ENCODE measurements at regions of chr4 and their contacts with region 1.

Region 1: GRCh38 chr4:77819843-77820648 is 878 bp upstream of the CNOT6L start:
- DNase-seq: peak; percentile 80
- ATAC-seq: peak; percentile 75
- H3K4me3 ChIP-seq: peak overlapping the region; percentile 97
- H3K27ac ChIP-seq: peak overlapping the region; percentile 64
- H3K4me1 ChIP-seq: peaks cover 12% of the 10 kb centered on the region
- H3K27me3 ChIP-seq: no peaks in the 10 kb centered on the region
- CTCF ChIP-seq: no peak

Region 2: GRCh38 chr4:77629885-77630284 is 190.2 kb before region 1 on chr4:
- CTCF ChIA-PET with region 1: no interaction called
- POLR2A ChIA-PET with region 1: no interaction called
- intact Hi-C with region 1: no loop called
- DNase-seq: no peak
- ATAC-seq: no peak
- H3K4me3 ChIP-seq: no peak overlapping the region
- H3K27ac ChIP-seq: no peak overlapping the region
- H3K4me1 ChIP-seq: no peaks in the 10 kb centered on the region
- H3K27me3 ChIP-seq: no peaks in the 10 kb centered on the region
- CTCF ChIP-seq: no peak

Region 3: GRCh38 chr4:77681792-77682191 is 138.3 kb before region 1 on chr4:
- CTCF ChIA-PET with region 1: no interaction called
- POLR2A ChIA-PET with region 1: no interaction called
- intact Hi-C with region 1: no loop called
- DNase-seq: no peak
- ATAC-seq: no peak
- H3K4me3 ChIP-seq: no peak overlapping the region
- H3K27ac ChIP-seq: no peak overlapping the region
- H3K4me1 ChIP-seq: no peaks in the 10 kb centered on the region
- H3K27me3 ChIP-seq: no peaks in the 10 kb centered on the region
- CTCF ChIP-seq: no peak

Region 4: GRCh38 chr4:77777135-77777807 is 42.8 kb before region 1 on chr4:
- CTCF ChIA-PET with region 1: no interaction called
- POLR2A ChIA-PET with region 1: no interaction called
- intact Hi-C with region 1: no loop called
- DNase-seq: no peak
- ATAC-seq: no peak
- H3K4me3 ChIP-seq: no peak overlapping the region
- H3K27ac ChIP-seq: no peak overlapping the region
- H3K4me1 ChIP-seq: no peaks in the 10 kb centered on the region
- H3K27me3 ChIP-seq: no peaks in the 10 kb centered on the region
- CTCF ChIP-seq: no peak

Region 5: GRCh38 chr4:77800077-77800476 is 20.0 kb before region 1 on chr4:
- CTCF ChIA-PET with region 1: interaction called, 12 read pairs
- POLR2A ChIA-PET with region 1: no interaction called
- intact Hi-C with region 1: no loop called
- DNase-seq: no peak
- ATAC-seq: no peak
- H3K4me3 ChIP-seq: no peak overlapping the region
- H3K27ac ChIP-seq: no peak overlapping the region
- H3K4me1 ChIP-seq: no peaks in the 10 kb centered on the region
- H3K27me3 ChIP-seq: no peaks in the 10 kb centered on the region
- CTCF ChIP-seq: no peak

Region 6: DNA sequence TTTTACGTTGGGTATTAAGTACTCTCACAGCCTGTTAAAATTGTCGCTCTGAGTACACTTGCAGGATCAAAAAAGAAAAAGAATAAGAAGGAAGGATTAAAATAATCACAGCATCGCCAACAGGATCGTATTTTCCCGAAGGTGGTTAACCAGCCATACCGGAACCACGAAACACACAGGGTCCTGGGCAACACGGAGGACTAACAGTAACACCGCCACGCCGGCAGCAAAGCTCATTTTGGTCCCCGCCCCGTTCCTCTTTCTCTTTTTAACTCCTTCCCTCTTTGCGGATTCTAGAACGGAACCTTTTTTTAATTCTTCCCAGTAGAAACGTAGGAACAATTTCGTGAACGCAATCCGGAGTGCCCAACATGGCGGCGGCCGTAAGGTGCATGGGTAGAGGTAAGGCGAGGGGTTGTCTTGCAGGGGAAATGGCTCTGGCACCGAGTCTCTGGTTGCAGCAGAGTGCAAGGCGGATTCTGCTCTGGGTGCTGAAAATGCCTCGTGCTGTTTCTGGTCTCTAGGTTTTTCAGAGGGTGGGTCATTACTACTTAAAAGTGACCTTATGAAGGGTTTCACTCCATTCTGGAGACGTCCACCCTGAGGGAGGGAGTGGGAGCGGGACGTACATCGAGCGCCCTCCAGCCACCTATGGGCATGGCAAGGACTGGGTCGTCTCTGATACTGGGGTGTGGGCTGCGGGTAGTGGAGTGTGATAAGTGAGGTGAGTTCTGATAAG is 42.6 kb after region 1 on chr4 and contains the start of gene MRPL1:
- CTCF ChIA-PET with region 1: no interaction called
- POLR2A ChIA-PET with region 1: no interaction called
- intact Hi-C with region 1: loop called (anchors 1 kb)
- DNase-seq: peak; percentile 94
- ATAC-seq: peak; percentile 84
- H3K4me3 ChIP-seq: peak within 1 kb of the TSS; percentile 89
- H3K27ac ChIP-seq: peak within 1 kb of the TSS; percentile 83
- H3K4me1 ChIP-seq: peaks cover 16% of the 10 kb centered on the region; the same call in 1 of the 2 replicates
- H3K27me3 ChIP-seq: no peaks in the 10 kb centered on the region
- CTCF ChIP-seq: peak; percentile 17; the same call in 1 of the 2 replicates
- total RNA-seq, gene MRPL1: 16.7 and 23.0 TPM in 2 replicates